ENCODE measurements at regions of chr18 and their contacts with region 1.

Region 1: DNA sequence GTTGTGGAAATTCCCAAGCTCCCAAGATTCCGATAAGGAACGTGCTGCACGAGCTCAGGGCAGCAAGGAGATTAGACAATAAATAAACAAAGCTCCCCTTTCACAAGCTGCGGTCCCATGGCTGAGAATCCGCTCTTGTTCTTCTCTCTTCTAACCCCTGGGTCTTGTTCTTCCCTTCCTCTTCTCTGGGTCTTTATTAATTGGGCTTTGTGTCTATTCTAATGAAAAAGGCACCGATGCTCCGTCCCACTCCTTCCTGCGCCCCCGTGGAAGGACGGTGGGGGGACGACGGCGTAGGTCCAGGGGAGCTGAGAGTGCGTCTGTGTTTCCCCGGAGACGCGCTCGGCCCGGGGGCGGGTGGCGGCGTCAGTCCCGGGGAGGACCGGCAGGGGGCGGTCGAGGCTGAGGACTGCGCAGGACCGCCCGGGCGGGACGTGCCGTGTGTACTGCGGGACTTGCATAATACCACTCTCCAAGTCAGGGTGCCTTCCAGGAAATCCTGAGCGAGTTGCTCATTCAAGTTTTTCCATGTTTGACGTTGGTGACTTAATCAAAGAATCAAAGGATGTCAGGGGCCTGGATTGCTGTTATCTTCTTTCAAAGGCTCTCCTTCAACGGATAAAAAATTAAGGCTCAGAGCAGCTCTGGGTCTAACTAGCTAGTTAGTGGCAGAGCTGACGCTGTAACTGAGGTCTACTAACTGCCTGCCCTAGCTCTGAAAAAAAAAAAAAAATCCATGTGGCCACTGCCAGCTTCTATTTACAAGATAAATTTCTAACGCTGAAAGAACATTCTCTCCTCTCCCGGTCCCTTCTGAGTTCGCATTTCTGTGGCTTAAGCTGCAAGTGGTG is 321.4 kb downstream of the TGIF1 start:
- DNase-seq: peak; percentile 86
- H3K4me3 ChIP-seq: peak overlapping the region; percentile 58
- H3K27ac ChIP-seq: peak overlapping the region; percentile 62
- H3K4me1 ChIP-seq: peaks cover 8% of the 10 kb centered on the region
- H3K27me3 ChIP-seq: no peaks in the 10 kb centered on the region
- CTCF ChIP-seq: peak; percentile 97

Region 2: DNA sequence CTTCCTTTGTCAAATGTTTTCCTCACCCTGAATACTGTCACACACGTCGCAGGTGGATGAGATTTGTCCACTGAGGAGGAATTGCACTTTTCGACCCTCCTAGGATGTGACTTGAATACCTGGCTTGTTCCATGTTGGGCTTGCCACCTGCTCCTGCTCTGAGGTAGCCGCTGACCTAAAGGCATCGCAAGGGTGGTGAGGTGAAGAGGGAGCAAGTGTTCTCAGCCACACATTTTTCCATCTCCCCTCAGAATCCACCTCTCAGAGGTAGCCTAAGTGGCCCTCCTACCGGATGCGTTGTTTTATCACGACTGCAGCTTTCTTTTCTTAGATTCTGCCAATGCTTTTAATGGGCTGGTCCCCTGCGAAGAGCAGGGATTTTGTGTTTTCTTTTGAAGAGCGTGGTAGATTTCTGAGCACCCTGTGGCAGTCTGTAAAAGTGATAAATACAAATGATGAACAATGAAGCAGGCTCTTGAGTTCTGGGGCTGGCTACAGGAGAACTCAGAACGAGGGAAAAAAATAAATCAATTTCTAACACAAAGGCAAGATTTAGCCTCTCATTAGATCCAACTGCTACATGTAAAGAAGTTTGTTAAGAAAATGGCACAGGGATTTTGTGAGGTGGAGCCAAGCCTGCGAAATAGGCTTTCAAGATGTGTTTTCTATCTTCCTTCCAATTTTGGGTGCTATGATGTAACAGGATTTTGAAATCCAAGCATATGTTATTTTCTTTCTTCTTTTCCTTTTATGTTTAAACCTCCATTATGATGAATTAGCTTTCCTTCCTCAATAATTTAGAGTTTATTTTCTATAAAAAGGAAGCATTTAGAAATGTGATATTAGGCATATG is 65.4 kb after region 1 on chr18:
- intact Hi-C with region 1: no loop called
- DNase-seq: no peak
- H3K4me3 ChIP-seq: no peak overlapping the region
- H3K27ac ChIP-seq: no peak overlapping the region
- H3K4me1 ChIP-seq: no peaks in the 10 kb centered on the region
- H3K27me3 ChIP-seq: peaks cover 11% of the 10 kb centered on the region
- CTCF ChIP-seq: no peak

Region 3: DNA sequence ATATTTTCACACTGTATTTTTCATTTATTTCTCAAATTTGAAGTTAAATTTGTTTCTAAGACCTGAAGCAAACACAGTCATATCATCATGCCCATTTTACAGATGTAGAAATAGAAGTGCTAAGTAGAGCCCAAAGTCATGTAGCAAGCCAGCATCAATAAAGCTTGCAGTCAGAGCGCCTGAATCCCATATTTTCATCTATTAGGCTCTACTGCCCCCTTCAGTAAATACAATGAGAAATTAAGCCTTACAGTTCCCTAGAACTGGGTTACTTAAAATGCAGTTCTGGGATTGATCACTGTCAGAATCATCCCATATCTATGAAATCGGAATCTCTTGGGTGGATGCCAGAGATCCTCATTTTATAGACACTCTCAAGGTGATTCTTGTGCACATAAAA is 98.5 kb after region 1 on chr18:
- intact Hi-C with region 1: loop called (anchors 10 kb)
- DNase-seq: no peak
- H3K4me3 ChIP-seq: no peak overlapping the region
- H3K27ac ChIP-seq: no peak overlapping the region
- H3K4me1 ChIP-seq: no peaks in the 10 kb centered on the region
- H3K27me3 ChIP-seq: no peaks in the 10 kb centered on the region
- CTCF ChIP-seq: peak; percentile 56

Region 4: DNA sequence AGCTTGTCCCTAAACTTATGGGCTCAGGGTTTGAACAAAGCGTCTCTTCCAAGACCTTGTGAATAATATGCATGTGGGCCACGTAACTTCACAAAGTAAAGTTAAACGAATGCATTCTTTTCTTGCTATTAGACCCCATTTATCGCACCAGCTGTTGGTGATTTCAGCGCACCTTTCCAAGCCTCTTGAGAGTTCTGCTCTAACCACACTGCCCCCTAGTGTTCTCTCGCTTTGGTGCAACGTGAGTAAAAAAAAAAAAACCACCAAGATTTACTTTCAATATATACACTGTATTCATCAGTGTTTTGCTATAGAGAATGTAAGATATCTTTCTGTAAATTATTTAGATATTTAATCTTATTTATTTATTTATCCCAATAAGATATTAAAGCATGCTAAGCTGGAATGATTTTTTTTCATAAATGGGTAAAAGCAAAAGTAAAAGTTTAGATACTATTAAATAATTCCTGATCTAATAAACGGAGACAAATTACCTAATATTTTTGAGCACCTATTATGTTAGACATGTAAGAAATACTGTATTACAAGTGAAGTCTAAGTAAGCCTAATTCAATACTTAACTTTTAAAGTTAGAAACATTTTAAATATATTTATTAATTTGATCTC is 224.2 kb after region 1 on chr18:
- intact Hi-C with region 1: loop called (anchors 5 kb)
- DNase-seq: no peak
- H3K4me3 ChIP-seq: peak overlapping the region; percentile 11
- H3K27ac ChIP-seq: no peak overlapping the region
- H3K4me1 ChIP-seq: peaks cover 18% of the 10 kb centered on the region
- H3K27me3 ChIP-seq: no peaks in the 10 kb centered on the region
- CTCF ChIP-seq: peak; percentile 89

Measured in left ventricle myocardium inferior (tissue), 1 donor.